Posterior vena cava (tissue), 2 donors: ENCODE measurements at regions of chr4 and their contacts with region 1.

Region 1: DNA sequence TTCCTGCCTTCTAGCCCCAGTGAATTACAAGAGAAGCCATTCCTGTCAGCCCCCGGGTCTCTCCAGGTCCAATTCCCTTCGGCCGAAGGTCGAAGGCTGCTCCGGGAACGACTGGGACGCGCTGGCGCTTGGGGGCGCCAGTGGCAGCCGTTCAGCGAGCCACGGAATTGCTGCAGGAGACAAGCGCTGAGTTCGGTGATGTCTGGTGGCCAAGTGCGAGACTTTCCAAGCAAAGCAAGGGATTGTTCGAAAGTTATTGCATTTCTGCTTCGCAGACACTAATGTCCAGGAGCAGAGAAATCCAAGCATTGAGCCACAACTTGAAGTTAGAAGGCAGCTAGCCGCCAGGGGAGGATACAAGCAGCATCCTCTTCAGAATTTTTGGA is 1.1 kb upstream of the DKK2 start:
- DNase-seq: peak; percentile 80

Region 2: GRCh38 chr4:107183155-107183774 is 146.1 kb after region 1 on chr4:
- intact Hi-C with region 1: loop called in 1 of 2 experiments (anchors 10 kb)
- DNase-seq: no peak